ENCODE measurements at regions of chr6 and their contacts with region 1.

Region 1: DNA sequence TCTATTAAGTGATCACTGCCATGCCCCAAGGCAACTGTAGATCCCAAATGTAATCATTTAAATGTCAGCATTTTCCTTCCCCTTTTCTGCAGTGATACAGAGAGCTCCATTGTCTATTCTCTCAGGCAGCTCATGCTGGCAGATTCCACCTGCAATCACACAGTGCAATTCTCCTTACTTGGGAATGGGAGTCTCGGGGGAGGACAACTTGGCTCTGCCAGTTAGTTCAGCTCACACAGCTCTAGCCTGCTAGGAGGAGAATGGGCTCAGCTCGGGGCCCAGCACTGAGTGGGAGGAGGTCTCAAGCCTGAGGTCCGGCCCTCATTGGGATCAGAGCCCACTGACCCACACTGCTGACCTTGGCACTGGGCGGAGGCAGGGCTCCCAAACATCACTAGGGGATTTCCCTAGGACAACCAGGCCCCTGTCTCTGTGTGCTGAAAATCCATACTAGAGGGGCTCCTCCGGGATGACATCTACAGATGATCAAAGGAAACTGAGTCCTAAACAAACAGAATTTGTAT is 109.2 kb upstream of the ASF1A start:
- DNase-seq: peak in 8 of 10 donors; percentile 7 to 48 (median 36)
- H3K4me3 ChIP-seq: peak overlapping the region in 12 of 59 donors; percentile 2 to 40 (median 24)
- H3K27ac ChIP-seq: peak overlapping the region in 50 of 59 donors; percentile 3 to 90 (median 66)
- H3K27me3 ChIP-seq: no peaks in the 10 kb centered on the region
- CTCF ChIP-seq: no peak

Region 2: DNA sequence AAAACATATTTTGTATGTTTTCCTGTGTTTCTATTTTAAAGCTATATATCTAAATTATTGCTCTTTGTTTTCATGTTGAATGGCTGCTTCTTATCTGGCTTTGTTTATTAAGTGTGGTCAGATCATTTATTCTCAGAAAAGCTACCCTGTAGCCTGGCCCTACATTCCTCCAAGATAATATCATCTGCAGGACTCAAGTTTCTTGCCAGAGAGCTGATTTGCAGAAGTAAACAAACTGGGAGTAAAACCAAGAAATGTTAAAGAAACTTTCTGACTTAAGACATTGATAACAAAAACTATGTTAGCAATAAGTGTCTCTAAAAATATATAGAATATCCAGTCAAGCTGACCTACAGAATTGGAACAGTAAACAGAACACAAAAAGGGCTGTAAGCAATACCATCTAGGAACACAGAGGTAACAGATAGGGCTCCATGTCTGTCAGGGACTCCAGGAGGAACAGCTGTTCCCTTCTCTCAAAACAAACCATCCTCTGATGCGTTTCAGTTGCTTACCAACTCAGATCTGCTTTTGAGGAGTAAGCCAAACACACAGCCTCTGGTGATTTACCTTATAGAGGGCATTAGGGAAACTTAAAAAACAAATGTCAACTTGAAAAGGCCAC is 115.8 kb before region 1 on chr6:
- intact Hi-C with region 1: no loop called
- DNase-seq: no peak
- H3K4me3 ChIP-seq: no peak overlapping the region
- H3K27ac ChIP-seq: no peak overlapping the region
- H3K27me3 ChIP-seq: no peaks in the 10 kb centered on the region
- CTCF ChIP-seq: no peak

Region 3: GRCh38 chr6:118709859-118710350 is 74.8 kb before region 1 on chr6:
- intact Hi-C with region 1: loop called in 1 of 2 experiments (anchors 5 kb)
- DNase-seq: no peak
- H3K4me3 ChIP-seq: peak overlapping the region in 42 of 59 donors; percentile 10 to 64 (median 49)
- H3K27ac ChIP-seq: peak overlapping the region in 47 of 59 donors; percentile 2 to 81 (median 57)
- H3K27me3 ChIP-seq: no peaks in the 10 kb centered on the region
- CTCF ChIP-seq: no peak

Measured in dorsolateral prefrontal cortex (tissue), 120 donors.